GM13977 (cell line): ENCODE measurements at regions of chr12 and their contacts with region 1.

Region 1: DNA sequence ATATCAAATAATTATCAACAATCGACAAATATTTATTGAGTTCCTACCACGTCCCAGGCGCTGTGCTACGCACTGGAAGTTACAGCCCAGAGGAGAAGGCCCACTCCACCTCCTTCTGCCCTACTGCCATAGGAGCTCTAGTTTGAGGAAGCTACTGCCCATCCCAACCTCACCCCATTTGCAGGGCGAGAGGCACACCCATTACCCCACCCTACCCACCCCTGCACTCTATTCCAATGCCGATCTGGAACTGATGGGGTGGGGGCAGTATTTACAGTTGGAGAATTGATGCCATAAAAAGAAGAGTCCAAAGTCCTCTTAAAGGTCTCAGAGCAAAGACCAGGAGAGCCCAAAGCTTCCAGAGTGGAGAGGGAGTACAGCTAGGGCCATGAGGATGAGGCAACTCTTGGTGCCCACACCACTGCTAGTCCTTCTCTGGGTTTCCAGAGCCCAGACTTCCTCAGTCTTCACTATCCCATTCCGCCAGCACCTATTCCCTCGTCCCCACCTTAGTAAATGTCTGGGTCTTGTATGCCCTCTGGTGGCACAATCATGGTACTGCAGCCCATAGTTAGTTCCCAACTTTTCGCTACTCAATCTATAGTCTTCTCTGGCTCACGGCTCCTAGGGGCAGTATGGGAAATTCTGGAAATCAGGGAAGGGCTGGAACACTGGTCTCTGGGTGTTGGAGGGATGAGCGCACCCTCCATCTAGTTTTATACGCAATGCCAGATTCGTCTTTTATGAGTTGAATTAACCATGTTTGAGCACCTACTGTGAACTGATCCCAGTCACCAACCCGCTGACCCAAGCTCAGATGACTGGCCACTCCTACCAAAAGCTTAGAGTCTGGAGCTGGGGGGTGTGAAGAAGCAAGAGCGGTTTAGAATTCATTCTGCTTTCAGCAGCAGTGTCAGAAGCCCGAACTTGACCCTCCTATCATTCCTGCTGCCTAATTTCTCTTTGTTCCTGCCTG is 6.9 kb upstream of the ADCY6 start:
- DNase-seq: peak; percentile 84
- CTCF ChIP-seq: peak; percentile 88

Region 2: DNA sequence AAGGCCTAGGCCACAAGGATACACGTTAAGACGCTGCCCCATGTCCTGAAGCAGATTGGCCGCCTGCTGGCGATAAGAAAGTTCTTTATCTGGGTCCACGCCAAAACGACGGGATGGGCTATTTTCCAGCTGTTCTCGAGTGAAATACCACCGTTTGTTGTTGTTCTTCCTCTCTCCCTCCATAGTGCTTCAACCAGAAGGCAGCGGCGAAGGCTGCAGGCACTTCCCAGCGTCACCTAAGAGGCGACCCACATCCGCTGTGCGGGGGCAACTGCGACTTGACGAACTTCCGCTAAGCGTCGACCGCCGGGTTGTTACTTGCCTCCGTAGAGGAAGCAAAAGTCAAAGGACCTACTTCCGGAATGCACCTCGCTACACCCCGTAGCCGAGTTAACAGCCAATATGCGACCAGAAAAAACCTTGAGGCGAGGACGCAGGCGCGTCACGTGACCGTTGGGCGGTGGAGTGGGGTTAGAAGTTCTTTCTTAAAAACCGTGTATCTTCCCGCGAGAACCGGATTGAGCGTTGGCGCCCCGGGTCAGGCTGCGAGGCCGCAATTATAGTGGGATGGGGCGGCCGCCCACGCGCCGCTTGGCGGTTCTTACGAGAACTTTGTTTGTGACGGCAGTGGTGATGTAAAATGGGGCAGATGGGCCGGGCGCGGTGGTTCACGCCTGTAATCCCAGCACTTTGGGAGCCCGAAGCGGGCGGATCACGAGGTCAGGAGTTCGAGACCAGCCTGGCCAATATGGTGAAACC is 79.1 kb before region 1 on chr12 and contains the start of gene CCNT1:
- in situ Hi-C with region 1: no loop called
- DNase-seq: peak; percentile 97
- CTCF ChIP-seq: no peak

Region 3: DNA sequence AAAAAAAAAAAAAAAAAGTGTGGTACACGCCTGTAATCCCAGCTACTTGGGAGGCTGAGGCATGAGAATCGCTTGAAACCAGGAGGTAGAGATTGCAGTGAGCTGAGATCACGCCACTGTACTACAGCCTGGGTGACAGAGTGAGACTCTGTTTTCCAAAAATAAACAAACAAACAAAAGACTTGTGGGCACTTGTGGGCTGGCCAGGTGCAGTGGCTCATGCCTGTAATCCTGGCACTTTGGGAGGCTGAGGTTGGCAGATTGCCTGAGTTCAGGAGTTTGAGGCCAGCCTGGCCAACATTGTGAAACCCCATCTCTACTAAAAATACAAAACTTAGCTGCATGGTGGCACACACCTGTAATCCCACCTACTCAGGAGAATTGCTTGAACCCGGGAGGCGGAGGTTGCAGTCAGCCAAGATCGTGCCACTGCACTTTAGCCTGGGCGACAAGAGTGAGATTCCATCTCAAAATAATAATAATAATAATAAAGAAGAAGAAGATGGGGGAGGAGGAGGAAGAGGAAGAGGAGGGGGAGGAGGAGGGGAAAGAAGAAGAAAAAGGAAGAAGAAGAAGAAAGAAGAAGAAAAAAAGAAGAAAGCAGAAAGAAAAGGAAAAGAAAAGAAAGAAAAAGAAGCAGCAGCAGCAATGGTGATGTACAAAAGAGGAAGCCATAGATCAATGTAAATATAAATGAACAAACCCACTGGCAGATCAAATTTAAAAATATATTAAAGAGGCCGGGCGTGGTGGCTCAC is 51.3 kb before region 1 on chr12:
- in situ Hi-C with region 1: loop called (anchors 5 kb)
- DNase-seq: no peak
- CTCF ChIP-seq: no peak